Activated T-helper 1 cell treated with anti-CD3 and anti-CD28 coated beads, Interleukin-12 subunit alpha, Interleukin-12 subunit beta, Interleukin-2, Interleukin-4 antibody, amounts not matched to agents 30 ng/mL and 10 ng/mL and 1 ng/mL, durations not matched to agents 14 hours and 24 hours and 36 hours (primary cell): ENCODE measurements at regions of chr11 and their contacts with region 1.

Region 1: DNA sequence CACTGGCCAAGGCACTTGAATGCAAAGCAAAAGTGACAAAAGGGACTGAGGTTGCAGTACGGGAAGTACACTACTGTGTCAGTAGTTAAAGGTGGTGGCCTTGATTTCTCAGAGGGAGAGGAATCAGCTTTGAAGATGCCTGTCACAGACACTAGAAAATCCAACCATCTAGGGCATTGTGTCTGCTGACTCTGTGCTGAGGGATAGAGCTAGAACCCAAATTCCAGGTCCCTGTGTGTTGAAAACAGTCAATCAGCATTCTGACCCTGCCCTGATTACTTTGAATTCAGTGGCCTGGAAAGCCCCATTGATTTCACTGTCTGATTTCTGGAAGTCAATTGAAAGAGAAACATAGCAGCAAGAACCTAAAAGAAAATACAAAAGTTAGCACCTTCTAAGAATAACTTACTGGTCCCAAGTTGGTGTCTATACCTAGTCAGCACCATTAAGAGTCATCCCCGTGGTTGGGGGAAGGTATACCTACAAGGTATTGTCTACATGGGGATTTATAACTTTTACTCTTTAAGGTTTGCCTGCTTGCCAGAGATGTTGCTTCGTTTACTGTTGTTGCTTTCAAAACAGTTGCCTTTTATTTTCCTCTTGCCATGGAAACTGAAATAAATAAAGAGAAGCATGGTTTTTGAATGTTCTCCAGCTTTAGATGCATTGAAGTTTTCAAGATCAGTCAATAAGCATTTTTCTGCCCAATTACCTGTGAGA is 97.3 kb downstream of the PDHX start:
- DNase-seq: peak; percentile 47
- H3K4me3 Mint-ChIP-seq: peak overlapping the region; percentile 51
- H3K27ac Mint-ChIP-seq: peak overlapping the region; percentile 88
- H3K4me1 Mint-ChIP-seq: peaks cover 53% of the 10 kb centered on the region
- H3K27me3 Mint-ChIP-seq: peaks cover 9% of the 10 kb centered on the region

Region 2: DNA sequence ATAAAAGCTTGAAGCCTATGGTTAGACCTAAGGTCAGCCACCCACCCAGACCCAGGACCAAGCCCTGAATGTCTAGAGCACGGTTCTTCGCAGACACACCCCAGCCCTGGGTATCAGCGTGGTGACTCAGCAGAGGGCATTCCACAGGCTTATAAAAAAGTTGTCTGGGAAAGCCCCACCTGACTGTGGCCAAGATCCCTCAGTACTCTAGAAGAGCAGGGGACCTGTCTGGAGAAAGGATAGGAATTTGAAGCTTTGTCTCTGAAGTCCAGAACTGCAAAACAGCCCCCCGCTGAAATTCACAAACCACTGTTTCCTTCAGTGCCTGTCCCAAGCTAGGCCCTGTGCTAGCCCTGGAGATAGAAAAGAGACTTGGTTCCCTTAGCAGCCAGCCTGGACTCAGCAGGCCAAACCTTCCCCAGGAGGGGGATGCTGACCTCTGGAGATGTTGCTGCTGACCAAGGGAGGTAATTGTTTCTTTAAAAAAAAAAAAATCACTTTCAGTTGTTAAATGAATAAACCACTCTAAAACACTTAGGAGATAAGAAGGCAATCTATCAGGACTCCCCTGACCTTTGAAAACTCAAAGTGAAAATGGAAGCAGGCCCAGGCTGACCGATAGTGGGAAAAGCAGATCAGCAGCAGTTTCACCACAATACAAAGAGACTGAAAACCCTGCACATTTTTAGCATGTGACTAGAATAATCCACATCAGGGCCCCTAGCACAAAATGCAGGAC is 769.8 kb before region 1 on chr11:
- intact Hi-C with region 1: loop called (anchors 10 kb)
- DNase-seq: peak; percentile 36
- H3K4me3 Mint-ChIP-seq: peak overlapping the region; percentile 65
- H3K27ac Mint-ChIP-seq: peak overlapping the region; percentile 71
- H3K4me1 Mint-ChIP-seq: peaks cover 94% of the 10 kb centered on the region
- H3K27me3 Mint-ChIP-seq: peaks cover 11% of the 10 kb centered on the region

Region 3: DNA sequence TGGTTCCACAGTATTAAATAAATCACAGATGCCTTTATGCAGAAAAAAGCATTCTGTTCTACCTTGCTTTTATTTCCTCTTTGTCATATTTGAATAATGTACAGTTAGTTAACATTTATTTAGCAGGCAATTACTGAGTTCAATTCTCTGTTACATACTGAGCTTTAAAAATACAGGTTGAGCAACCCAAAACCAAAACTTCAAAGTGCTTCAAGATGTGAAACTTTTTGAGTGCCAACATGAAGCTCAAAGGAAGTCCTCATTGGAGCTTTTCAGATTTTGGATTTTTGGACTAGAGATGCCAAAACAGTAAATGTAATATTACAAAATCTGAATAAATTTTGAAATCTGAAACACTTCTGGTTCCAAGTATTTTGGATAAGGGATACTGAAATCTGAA is 43.2 kb before region 1 on chr11:
- intact Hi-C with region 1: no loop called
- DNase-seq: no peak
- H3K4me3 Mint-ChIP-seq: no peak overlapping the region
- H3K27ac Mint-ChIP-seq: no peak overlapping the region
- H3K4me1 Mint-ChIP-seq: no peaks in the 10 kb centered on the region
- H3K27me3 Mint-ChIP-seq: no peaks in the 10 kb centered on the region

Region 4: DNA sequence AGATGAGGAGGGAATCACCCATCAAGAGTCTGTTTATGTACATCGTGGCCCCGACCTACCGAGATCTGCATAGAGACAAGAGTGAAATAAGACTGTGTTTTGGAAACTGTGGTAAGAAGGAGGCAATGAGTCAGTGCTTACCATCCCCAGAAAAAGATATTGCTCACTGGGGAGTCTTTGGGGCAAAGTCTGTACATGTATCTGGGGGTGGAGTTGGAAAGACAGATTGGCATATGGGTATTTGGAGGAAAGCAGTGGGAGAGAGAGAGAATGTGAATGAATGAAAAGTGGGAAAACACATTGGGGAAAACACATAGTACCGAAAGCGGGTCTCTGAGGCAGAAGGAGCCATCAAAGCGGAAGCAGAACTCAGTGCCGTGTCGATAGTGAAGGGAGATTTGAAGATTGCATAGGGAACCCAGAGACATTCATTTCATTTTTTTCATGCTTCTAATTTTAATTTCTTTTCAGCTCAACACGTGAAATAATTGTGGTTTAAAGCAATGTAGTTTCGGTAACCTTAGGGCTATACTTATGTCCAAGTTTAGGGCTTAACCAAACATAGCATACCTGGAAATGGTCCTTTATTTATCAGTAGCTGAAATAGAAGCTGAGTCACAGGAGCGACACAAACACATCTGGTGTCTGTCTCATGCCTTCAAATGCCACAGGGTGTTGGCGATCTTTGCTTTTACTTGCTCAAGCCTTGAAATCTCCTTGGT is 26.7 kb after region 1 on chr11:
- intact Hi-C with region 1: loop called (anchors 1 kb)
- DNase-seq: peak; percentile 70
- H3K4me3 Mint-ChIP-seq: peak overlapping the region; percentile 72
- H3K27ac Mint-ChIP-seq: peak overlapping the region; percentile 93
- H3K4me1 Mint-ChIP-seq: peaks cover 66% of the 10 kb centered on the region
- H3K27me3 Mint-ChIP-seq: peaks cover 2% of the 10 kb centered on the region

Region 5: DNA sequence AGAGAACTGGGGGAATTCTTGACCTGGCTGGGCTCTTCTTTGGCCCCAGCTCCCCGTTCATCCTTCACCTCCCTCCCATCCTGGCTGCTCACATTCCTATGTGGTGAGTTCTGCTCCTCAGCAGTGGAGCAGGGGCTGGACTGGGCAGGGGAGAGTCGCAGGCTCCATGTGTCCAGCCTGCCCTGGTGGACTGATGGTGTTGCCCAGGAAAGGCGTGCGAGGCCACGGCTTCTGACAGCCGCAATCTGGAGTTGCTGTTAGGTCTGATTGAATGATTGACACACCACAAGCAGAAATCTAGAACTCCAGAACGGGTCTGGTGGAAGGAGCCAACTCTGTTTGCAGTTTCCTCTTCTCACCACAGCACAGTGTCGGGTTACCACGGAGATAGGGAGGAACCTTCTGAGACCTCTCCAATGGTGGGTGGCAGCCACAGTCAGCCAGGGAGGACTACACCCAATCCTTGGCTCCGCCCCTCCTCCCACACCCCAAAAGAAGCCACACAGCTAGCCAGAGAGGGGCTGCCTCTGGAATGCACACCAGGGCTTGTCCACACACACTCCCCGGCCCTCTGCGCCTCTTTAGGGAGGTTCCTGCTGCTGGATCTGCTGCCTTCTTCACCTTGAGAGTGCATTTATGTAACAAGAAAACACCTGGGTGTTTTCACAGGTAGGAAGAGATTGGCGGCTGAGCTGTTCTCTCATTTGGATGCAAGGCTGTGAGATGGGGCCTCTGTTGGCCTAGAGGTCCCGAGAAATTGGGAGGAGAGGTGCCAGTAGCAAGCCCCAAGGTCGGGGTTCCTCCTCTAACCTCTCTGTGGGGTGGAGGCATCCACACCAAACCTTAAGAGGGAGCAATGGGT is 68.9 kb after region 1 on chr11:
- intact Hi-C with region 1: loop called (anchors 1 kb)
- DNase-seq: peak; percentile 85
- H3K4me3 Mint-ChIP-seq: peak overlapping the region; percentile 56
- H3K27ac Mint-ChIP-seq: peak overlapping the region; percentile 91
- H3K4me1 Mint-ChIP-seq: peaks cover 82% of the 10 kb centered on the region
- H3K27me3 Mint-ChIP-seq: no peaks in the 10 kb centered on the region

Region 6: DNA sequence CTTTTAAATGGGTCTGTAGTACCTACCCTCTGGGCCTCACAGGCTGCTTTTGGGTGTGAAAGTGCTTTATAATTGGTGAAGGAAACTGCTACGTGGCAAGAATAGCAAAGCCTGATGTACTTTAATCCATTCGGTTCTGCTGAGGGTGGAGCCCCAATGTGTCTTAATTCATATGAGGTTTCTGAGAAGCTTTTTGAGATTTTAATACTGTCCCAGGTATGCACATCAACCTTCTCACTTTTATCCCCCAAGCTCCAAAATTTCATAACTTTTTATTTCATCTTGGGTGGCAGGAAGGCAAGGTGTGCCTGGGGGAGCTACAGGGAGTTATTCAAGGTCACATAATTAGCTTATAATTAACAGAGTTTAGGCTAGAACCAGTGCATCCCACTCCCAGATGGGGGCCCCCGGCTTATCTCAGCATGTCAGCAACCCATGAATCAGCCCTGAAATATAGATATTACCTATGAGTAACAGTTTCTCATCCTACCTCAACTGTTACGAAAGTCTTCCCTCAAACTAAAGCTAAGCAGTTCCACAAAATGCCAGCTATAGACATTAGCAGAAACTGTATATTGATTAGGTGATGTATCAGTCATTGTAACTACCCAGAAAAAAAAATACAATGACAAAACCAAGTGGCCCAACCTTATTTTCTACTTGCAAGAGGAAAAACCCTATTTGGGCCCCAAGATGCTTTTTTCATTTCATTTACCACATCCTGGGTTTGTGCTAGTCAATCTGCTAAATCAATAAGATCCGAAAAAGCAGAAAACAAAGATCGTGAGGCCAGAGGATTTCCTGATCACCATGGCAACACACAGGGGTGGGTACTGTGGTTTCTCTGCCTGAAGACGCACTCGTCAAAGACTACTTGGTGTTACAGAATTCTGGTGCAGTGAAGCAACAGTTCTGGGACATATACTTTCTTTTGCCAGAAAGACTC is 152.0 kb after region 1 on chr11:
- intact Hi-C with region 1: loop called (anchors 1 kb)
- DNase-seq: peak; percentile 92
- H3K4me3 Mint-ChIP-seq: peak overlapping the region; percentile 63
- H3K27ac Mint-ChIP-seq: peak overlapping the region; percentile 97
- H3K4me1 Mint-ChIP-seq: peaks cover 100% of the 10 kb centered on the region
- H3K27me3 Mint-ChIP-seq: no peaks in the 10 kb centered on the region

Region 7: DNA sequence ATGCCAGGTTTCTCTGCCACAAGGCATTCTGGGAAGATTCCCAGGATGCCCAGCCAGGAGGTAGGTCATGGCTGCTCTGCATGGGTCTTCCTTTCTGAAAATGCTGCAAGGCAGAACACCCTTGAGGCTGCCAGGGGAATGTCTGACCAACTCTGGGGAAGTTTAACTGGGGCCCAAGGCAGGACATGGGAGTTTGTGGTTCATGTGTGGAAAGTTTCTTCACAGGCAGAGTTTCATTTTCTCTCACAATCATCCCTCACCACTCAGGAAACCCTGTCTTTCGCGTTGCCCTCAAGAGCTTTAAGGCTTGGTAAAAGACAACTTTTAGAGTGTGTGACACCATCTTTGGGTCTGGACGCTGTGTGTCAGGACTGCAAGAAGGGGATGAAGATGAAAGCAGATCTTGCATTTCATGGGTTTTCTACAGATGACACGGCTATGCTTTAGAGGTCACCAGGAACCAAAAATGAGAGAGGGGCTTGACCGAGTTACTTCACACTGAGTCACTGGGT is 258.8 kb after region 1 on chr11:
- intact Hi-C with region 1: loop called (anchors 1 kb)
- DNase-seq: peak; percentile 54
- H3K4me3 Mint-ChIP-seq: peak overlapping the region; percentile 3
- H3K27ac Mint-ChIP-seq: peak overlapping the region; percentile 86
- H3K4me1 Mint-ChIP-seq: peaks cover 61% of the 10 kb centered on the region
- H3K27me3 Mint-ChIP-seq: peaks cover 12% of the 10 kb centered on the region